ENCODE measurements at regions of chr2 and their contacts with region 1.

Region 1: DNA sequence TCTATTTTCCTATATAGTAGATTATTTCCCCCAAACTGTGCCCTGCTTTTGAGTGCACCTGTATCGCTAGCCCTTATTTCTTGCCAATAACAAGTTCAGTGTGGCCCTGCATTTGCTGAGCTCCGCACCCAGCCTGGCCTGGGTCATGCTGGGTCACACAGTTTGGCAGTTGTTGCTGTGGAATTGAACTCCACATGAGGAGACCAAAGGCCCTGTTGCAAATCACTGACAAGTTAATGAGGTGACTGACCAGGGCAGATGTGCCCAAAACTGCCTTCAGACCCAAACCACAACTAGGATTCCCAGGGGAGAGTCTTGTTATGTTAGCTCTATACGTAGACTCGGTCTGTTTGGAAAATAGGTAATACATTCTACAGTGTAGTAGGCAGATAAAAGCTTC is 31.0 kb downstream of the COL4A4 start:
- DNase-seq: no peak
- H3K4me3 ChIP-seq: no peak overlapping the region
- H3K27ac ChIP-seq: no peak overlapping the region
- H3K27me3 ChIP-seq: peaks cover 0 to 13% (median 0%) of the 10 kb centered on the region in 45 donors
- CTCF ChIP-seq: no peak

Region 2: DNA sequence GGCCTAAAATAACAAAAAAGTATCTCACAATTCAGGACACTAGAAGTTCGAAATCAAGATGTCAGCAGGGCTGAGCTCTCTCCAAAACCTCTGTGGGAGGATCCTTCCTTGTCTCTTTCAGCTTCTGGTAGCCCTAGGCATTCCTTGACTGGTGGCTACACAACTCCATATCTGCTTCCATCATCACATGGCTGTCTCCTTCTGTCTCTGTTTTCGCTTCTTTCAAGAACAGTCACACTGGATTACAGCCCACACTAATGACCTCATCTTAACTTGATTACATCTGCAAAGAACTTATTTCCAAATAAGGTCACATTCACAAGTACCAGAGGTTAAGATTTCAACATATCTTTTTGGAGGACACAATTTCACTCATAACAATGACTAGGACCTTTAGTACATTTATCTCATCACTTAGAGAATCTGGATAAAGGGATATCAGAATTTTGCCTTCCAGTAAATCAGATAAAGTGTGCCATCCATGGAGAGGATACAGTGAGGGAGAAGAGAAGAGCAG is 608.5 kb before region 1 on chr2:
- intact Hi-C with region 1: no loop called
- DNase-seq: no peak
- H3K4me3 ChIP-seq: no peak overlapping the region
- H3K27ac ChIP-seq: peak overlapping the region in 1 of 59 donors; percentile 2
- H3K27me3 ChIP-seq: no peaks in the 10 kb centered on the region
- CTCF ChIP-seq: no peak

Region 3: GRCh38 chr2:227238238-227239237 is 105.6 kb after region 1 on chr2:
- intact Hi-C with region 1: loop called (anchors 2 to 5 kb)
- DNase-seq: peak; percentile 53 to 83 (median 66)
- H3K4me3 ChIP-seq: no peak overlapping the region
- H3K27ac ChIP-seq: no peak overlapping the region
- H3K27me3 ChIP-seq: peaks cover 0 to 3% (median 0%) of the 10 kb centered on the region in 45 donors
- CTCF ChIP-seq: peak; percentile 92 to 100 (median 98)